PC-9 (cell line): ENCODE measurements at regions of chr12 and their contacts with region 1.

Region 1: GRCh38 chr12:6370994-6371754 is 4.2 kb downstream of the SCNN1A start:
- DNase-seq: peak; percentile 99
- H3K4me3 ChIP-seq: peak overlapping the region; percentile 62
- H3K27ac ChIP-seq: peak overlapping the region; percentile 89
- H3K4me1 ChIP-seq: peaks cover 57% of the 10 kb centered on the region
- H3K27me3 ChIP-seq: no peaks in the 10 kb centered on the region
- CTCF ChIP-seq: peak; percentile 43; the same call in 1 of the 2 replicates

Region 2: GRCh38 chr12:6092784-6093722 is 278.1 kb before region 1 on chr12:
- CTCF ChIA-PET with region 1: interaction called, 4 read pairs
- POLR2A ChIA-PET with region 1: interaction called, 15 read pairs
- intact Hi-C with region 1: no loop called
- DNase-seq: peak; percentile 97
- H3K4me3 ChIP-seq: peak overlapping the region; percentile 37
- H3K27ac ChIP-seq: peak overlapping the region; percentile 80
- H3K4me1 ChIP-seq: peaks cover 59% of the 10 kb centered on the region
- H3K27me3 ChIP-seq: no peaks in the 10 kb centered on the region
- CTCF ChIP-seq: no peak; the same call in 1 of the 2 replicates

Region 3: DNA sequence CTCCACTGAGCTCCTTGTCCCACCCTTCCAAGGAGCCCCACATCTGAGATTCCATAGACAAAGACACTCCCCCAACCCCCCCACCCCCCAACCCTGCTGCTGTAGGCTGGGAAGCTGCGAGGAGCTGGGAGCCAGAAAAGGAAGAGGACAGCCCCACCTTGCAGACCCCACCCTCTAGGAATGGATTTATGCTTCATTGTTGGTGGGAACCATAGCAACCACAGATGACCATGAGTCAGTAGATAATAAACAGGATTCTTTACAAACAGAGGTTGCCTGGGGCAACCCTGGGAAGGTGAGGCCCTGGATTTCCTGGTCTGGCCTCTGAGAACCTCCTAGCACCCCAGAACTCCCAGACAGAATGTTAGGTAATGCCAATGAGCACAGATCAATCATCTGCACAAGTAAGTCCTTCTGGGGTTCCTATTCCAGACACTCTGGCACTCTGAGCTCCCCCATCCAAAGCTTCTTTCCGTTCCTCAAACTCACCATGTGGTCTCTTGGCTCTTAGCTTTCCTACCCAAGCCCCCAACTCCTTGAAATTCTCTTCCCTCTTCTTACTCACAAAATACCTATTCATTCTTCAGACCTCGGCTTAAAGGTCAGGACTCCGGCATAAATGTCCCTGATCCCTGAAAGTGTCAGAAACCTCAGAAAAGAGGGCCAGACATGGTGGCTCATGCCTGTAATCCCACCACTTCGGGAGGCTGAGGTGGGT is 75.9 kb before region 1 on chr12:
- CTCF ChIA-PET with region 1: interaction called, 3 read pairs
- POLR2A ChIA-PET with region 1: interaction called, 52 read pairs
- intact Hi-C with region 1: loop called (anchors 2 kb)
- DNase-seq: peak; percentile 95 to 99
- H3K4me3 ChIP-seq: no peak overlapping the region; the same call in 1 of the 2 replicates
- H3K27ac ChIP-seq: peak overlapping the region; percentile 91
- H3K4me1 ChIP-seq: peaks cover 64% of the 10 kb centered on the region
- H3K27me3 ChIP-seq: no peaks in the 10 kb centered on the region
- CTCF ChIP-seq: no peak

Region 4: DNA sequence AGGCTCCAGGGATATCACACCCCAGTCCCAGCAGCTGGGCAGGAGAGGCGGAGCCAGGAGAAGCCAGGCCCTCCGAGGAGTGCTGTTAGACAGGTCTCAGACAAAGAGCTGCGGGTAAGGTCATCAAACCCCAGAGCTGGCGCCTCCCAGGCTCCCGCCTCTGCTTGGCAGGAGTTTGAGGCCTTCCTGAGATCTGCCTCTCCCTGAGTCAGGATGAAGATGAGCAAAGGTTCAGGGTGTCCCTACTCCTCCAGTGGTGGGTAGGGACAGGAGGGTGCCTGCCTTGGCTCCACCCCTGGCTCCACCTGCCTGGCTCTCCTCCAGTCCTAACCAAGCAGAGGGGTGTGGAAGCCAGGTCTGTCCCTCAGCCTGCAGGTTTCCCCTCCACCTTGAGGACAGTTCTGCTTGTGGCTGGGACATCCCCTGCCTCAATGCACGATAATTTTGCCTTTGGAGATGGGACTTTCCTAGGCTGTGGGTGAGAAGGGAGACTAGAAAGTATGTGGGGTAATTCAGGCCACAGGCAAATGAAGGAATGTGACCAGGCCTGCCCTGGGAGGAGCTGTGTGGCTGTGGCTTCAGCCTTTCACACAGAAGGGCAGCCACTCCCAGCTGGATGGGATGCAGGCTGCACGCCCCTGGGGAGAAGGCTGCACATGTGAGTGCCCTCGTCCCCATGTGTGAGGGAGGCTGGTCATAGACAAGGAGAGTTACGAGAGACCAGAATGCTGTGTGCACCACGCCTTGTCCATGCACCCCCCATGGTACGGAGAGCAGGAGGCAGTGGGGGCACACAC is 58.4 kb before region 1 on chr12:
- CTCF ChIA-PET with region 1: interaction called, 5 read pairs
- POLR2A ChIA-PET with region 1: interaction called, 4 read pairs
- intact Hi-C with region 1: loop called (anchors 1 kb)
- DNase-seq: peak; percentile 96
- H3K4me3 ChIP-seq: peak overlapping the region; percentile 33; the same call in 1 of the 2 replicates
- H3K27ac ChIP-seq: peak overlapping the region; percentile 97
- H3K4me1 ChIP-seq: peaks cover 54% of the 10 kb centered on the region
- H3K27me3 ChIP-seq: no peaks in the 10 kb centered on the region
- CTCF ChIP-seq: no peak

Region 5: GRCh38 chr12:6345319-6346091 is 25.7 kb before region 1 on chr12:
- CTCF ChIA-PET with region 1: interaction called, 5 read pairs
- POLR2A ChIA-PET with region 1: interaction called, 18 read pairs
- intact Hi-C with region 1: no loop called
- DNase-seq: peak; percentile 76 to 87
- H3K4me3 ChIP-seq: no peak overlapping the region
- H3K27ac ChIP-seq: peak overlapping the region; percentile 48
- H3K4me1 ChIP-seq: peaks cover 43% of the 10 kb centered on the region
- H3K27me3 ChIP-seq: no peaks in the 10 kb centered on the region
- CTCF ChIP-seq: no peak

Region 6: GRCh38 chr12:6383572-6384498 is 12.7 kb after region 1 on chr12 and contains the start of gene LTBR:
- CTCF ChIA-PET with region 1: interaction called, 4 read pairs
- POLR2A ChIA-PET with region 1: interaction called, 29 read pairs
- intact Hi-C with region 1: loop called (anchors 1 kb)
- DNase-seq: peak; percentile 88 to 99
- H3K4me3 ChIP-seq: peak within 1 kb of the TSS; percentile 77
- H3K27ac ChIP-seq: peak within 1 kb of the TSS; percentile 69
- H3K4me1 ChIP-seq: peaks cover 29% of the 10 kb centered on the region
- H3K27me3 ChIP-seq: no peaks in the 10 kb centered on the region
- CTCF ChIP-seq: 0 out of 2 replicates have a peak, but pooled peaks have one; percentile 20
- total RNA-seq, gene LTBR: 178 and 185 TPM in 2 replicates

Region 7: DNA sequence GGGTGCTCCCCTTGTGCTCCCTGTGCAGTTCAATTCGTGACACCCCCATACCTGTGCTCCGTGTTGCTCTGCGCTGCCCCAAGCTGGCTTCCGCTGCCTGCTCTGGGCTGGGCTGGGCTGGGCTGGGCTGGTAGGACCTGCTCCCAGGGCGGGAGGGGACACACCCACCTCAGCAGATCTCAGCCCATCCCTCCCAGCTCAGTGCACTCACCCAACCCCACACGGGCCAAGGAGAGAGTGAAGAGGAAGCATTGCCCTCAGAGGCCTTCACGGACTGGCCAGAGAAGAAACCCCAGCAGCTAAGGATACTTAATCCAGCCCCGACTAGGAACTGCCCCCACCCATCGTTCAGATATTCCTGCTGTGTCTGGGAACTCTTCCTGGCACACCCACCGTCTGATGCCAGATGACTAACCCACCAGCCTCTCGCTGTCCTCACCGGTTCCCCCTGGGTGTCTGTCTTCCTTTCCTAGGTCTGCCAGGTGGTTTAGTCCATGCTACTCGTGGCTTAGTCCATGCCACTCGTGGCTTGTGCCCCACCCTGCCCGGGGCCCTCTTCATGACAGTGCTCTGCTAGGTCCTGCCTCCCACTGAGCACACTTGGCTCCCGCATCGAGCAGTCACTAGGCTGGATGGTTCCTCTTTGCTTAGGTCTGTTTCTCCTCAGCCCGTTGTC is 264.8 kb after region 1 on chr12 and contains the start of gene LPAR5:
- CTCF ChIA-PET with region 1: no interaction called
- POLR2A ChIA-PET with region 1: no interaction called
- intact Hi-C with region 1: no loop called
- DNase-seq: peak; percentile 84 to 91
- H3K4me3 ChIP-seq: peak within 1 kb of the TSS; percentile 48; the same call in 1 of the 2 replicates
- H3K27ac ChIP-seq: peak within 1 kb of the TSS; percentile 38
- H3K4me1 ChIP-seq: peaks cover 22% of the 10 kb centered on the region
- H3K27me3 ChIP-seq: no peaks in the 10 kb centered on the region
- CTCF ChIP-seq: no peak
- total RNA-seq, gene LPAR5: 14.2 and 14.8 TPM in 2 replicates

Region 8: DNA sequence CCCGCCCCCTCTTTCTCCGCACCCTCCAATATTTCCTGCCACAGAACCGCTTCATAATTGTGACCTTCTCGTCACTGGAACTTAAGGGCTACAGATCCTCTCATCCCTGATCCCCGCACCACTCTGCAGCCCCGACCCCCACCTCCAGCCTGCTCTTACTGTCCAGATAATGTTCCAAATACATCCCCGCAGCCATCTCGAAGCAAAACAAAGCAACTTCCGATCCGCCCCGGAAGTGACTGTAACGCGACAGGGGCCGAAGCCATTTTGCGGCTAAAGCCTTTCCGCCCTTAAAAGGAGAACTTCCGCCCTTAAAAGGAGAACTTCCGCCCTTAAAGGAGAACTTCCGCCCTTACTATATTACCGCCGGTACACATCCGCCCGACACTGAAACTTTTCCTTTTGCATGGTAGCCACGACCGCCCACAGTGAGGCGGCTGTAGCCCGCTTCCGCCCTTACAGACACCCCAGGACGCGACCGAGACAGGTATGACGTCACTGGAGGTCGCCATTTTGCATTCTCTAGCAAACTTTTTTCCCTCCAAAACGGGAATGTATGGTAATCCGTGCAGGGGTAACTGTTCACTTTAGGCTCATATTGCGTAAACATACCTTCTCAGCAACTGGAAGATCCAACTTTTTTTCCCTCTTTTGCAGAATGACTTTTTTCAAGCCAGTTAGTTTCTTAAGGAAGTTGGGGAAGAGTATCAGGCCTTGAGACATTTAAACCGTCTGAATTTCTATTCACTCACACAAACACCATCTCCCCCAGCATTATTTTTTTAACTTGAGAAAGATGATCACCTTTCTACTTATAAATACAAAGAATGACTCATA is 291.9 kb after region 1 on chr12 and contains the start of gene ING4:
- CTCF ChIA-PET with region 1: no interaction called
- POLR2A ChIA-PET with region 1: no interaction called
- intact Hi-C with region 1: no loop called
- DNase-seq: peak; percentile 98 to 99
- H3K4me3 ChIP-seq: peak within 1 kb of the TSS; percentile 63
- H3K27ac ChIP-seq: peak within 1 kb of the TSS; percentile 58
- H3K4me1 ChIP-seq: peaks cover 8% of the 10 kb centered on the region
- H3K27me3 ChIP-seq: no peaks in the 10 kb centered on the region
- CTCF ChIP-seq: no peak
- total RNA-seq, gene ING4: 87.6 and 88.7 TPM in 2 replicates